Cardiac septum (tissue), 1 donor: ENCODE measurements at regions of chr19 and their contacts with region 1.

Region 1: GRCh38 chr19:35716801-35717666 is 769 bp upstream of the KMT2B start:
- DNase-seq: peak; percentile 97

Region 2: GRCh38 chr19:35228177-35228930 is 488.7 kb before region 1 on chr19 and contains the start of gene FAM187B:
- intact Hi-C with region 1: no loop called
- DNase-seq: no peak
- total RNA-seq, gene FAM187B: not detected

Region 3: GRCh38 chr19:35545001-35545911 is 171.8 kb before region 1 on chr19 and contains the start of gene TMEM147:
- intact Hi-C with region 1: loop called (anchors 5 kb)
- DNase-seq: peak; percentile 95
- total RNA-seq, gene TMEM147: 64.4 TPM

Region 4: GRCh38 chr19:35693830-35694599 is 23.0 kb before region 1 on chr19:
- intact Hi-C with region 1: loop called (anchors 1 kb)
- DNase-seq: peak; percentile 92

Region 5: GRCh38 chr19:35740423-35741202 is 23.6 kb after region 1 on chr19:
- intact Hi-C with region 1: loop called (anchors 2 kb)
- DNase-seq: peak; percentile 99

Region 6: GRCh38 chr19:35790981-35791813 is 74.2 kb after region 1 on chr19:
- intact Hi-C with region 1: no loop called
- DNase-seq: no peak

Region 7: DNA sequence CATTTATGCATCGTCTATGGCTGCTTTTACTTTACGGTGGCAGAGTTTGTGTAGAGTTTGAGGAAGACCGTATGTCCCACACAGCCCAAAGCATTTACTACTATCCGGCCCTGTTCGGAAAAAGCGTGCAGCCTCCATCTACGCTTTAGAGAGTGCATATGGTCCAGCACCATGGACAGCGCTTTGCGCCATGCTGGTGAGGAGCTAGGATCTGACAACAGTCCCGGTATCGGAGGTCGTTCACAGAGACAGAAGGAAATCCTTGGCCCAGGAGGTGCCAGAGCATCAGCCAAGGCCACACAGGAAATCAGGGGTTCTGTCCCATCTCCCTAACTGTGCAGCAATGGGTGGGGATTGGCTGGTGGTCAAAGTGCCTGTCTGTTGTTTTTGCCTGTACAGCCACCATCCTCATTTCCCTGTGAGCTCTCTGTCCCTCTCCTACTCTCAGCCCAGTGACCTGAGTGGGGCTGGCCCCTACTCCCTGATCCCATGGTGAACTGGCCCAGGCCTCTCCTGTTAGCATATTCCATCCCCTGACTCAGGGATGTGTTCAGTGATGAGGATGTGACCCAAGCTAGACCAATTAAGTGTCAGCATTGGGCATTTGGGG is 111.8 kb after region 1 on chr19:
- intact Hi-C with region 1: loop called (anchors 10 kb)
- DNase-seq: no peak

Region 8: GRCh38 chr19:35931161-35931873 is 214.3 kb after region 1 on chr19:
- intact Hi-C with region 1: loop called (anchors 1 kb)
- DNase-seq: peak; percentile 100